ENCODE measurements at regions of chr5 and their contacts with region 1.

Region 1: DNA sequence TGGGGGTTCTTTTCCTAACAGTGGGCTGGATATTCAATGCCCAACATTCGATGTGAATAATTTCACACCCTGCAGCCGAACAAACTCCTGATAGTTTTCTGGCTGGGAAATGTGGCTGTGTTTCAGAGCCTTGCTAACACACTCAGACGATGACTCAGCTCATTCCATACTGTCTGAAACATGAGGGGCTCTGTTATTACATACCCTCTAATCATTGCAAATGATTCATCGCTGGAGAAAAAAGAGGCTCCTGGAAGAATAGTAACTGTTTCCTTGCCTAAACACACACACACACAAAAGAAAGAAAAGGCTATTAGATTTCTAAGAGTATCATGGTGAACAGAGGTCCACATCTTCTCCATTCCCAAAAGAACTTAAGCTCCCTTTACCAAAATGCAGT is 75.8 kb downstream of the OXCT1 start:
- DNase-seq: peak; percentile 80
- H3K4me3 Mint-ChIP-seq: no peak overlapping the region
- H3K27ac Mint-ChIP-seq: peak overlapping the region; percentile 79
- H3K4me1 Mint-ChIP-seq: peaks cover 21% of the 10 kb centered on the region
- H3K27me3 Mint-ChIP-seq: no peaks in the 10 kb centered on the region
- CTCF ChIP-seq: no peak

Region 2: GRCh38 chr5:41485533-41485932 is 308.9 kb before region 1 on chr5:
- CTCF ChIA-PET with region 1: no interaction called
- POLR2A ChIA-PET with region 1: no interaction called
- intact Hi-C with region 1: no loop called
- DNase-seq: no peak
- H3K4me3 Mint-ChIP-seq: no peak overlapping the region
- H3K27ac Mint-ChIP-seq: no peak overlapping the region
- H3K4me1 Mint-ChIP-seq: no peaks in the 10 kb centered on the region
- H3K27me3 Mint-ChIP-seq: no peaks in the 10 kb centered on the region
- CTCF ChIP-seq: no peak

Region 3: GRCh38 chr5:41809128-41809527 is 14.7 kb after region 1 on chr5:
- CTCF ChIA-PET with region 1: interaction called, 4 read pairs
- POLR2A ChIA-PET with region 1: interaction called, 10 read pairs
- intact Hi-C with region 1: no loop called
- DNase-seq: no peak
- H3K4me3 Mint-ChIP-seq: no peak overlapping the region
- H3K27ac Mint-ChIP-seq: no peak overlapping the region
- H3K4me1 Mint-ChIP-seq: peaks cover 12% of the 10 kb centered on the region
- H3K27me3 Mint-ChIP-seq: no peaks in the 10 kb centered on the region
- CTCF ChIP-seq: no peak